ENCODE measurements at regions of chr6 and their contacts with region 1.

Region 1: GRCh38 chr6:149545754-149546528 is at the start of gene PPIL4:
- DNase-seq: peak; percentile 98
- H3K4me3 ChIP-seq: peak within 1 kb of the TSS; percentile 78 to 99 (median 88)
- H3K27ac ChIP-seq: peak within 1 kb of the TSS; percentile 94 to 99 (median 98)
- H3K4me1 ChIP-seq: peaks cover 0 to 31% (median 23%) of the 10 kb centered on the region in 4 donors
- H3K27me3 ChIP-seq: no peaks in the 10 kb centered on the region
- CTCF ChIP-seq: peak; percentile 49 to 87 (median 70)
- EP300 ChIP-seq: peak in 3 of 4 donors; percentile 17 to 89 (median 35)
- POLR2A ChIP-seq: peak; percentile 85 to 86
- total RNA-seq, gene PPIL4: 31.3 to 35.0 (median 31.9) TPM

Region 2: GRCh38 chr6:149565527-149566409 is 19.8 kb after region 1 on chr6 and contains the start of gene GINM1:
- intact Hi-C with region 1: loop called (anchors 2 kb)
- DNase-seq: peak; percentile 95
- H3K4me3 ChIP-seq: peak within 1 kb of the TSS; percentile 83 to 100 (median 94)
- H3K27ac ChIP-seq: peak within 1 kb of the TSS; percentile 94 to 99 (median 96)
- H3K4me1 ChIP-seq: peaks cover 0 to 16% (median 12%) of the 10 kb centered on the region in 4 donors
- H3K27me3 ChIP-seq: no peaks in the 10 kb centered on the region
- CTCF ChIP-seq: peak; percentile 31 to 61 (median 58)
- EP300 ChIP-seq: no peak
- POLR2A ChIP-seq: no peak
- total RNA-seq, gene GINM1: 61.6 to 82.4 (median 74.4) TPM

Region 3: DNA sequence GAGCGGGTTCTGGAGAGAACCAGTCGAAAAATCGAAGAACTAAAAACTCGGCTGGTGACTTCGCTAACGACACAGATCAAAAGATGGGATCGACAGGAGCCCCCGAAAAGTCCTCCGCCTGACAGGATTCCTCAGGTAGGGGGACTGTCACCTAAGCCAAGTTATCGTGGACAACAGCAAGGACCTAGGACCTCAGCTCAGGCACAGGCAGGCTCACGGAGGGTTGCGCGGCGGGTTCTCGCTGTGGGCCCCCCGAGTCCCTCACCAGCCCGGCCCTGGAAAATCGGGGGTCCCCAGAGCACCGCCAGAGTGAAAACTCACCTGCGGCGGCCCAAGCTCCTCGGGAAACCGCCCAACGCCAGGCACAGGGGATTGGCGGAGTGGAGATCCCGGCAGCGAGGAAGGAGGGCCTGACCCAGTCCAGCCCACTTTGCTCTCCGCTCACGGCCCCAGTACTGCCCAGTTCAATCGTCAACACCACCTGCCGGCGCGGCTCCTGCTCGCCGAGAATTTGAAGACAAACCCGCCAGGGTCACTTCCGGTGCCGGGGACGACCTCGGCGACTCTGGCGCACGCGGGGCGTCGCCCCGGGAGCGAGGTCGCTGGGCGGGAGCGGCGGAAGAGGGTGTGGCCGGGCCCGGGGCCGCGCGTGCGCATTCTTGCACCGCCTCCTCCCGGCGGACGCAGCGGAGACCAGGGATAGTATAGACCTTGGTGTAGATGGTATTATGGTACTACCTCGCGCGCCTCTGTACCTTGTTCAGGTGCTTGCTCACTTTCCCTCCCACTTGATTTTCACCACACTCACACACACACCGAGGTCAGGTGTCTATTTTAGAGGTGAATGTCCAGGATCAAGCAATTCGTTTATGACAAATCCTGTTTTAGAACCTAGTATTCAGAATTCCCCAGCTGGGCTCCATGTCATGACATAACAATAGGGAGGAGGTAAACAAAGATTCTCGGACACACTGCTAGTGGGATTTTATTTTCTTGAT is 102.5 kb after region 1 on chr6 and contains the start of gene KATNA1:
- intact Hi-C with region 1: loop called (anchors 2 kb)
- DNase-seq: peak; percentile 89
- H3K4me3 ChIP-seq: peak within 1 kb of the TSS; percentile 78 to 98 (median 87)
- H3K27ac ChIP-seq: peak within 1 kb of the TSS; percentile 75 to 85 (median 82)
- H3K4me1 ChIP-seq: peaks cover 0 to 20% (median 12%) of the 10 kb centered on the region in 4 donors
- H3K27me3 ChIP-seq: no peaks in the 10 kb centered on the region
- CTCF ChIP-seq: no peak
- EP300 ChIP-seq: no peak
- POLR2A ChIP-seq: peak; percentile 24 to 58
- total RNA-seq, gene KATNA1: 17.5 to 22.5 (median 20.6) TPM

Region 4: GRCh38 chr6:149925974-149926777 is 380.2 kb after region 1 on chr6:
- intact Hi-C with region 1: loop called (anchors 10 kb)
- DNase-seq: peak; percentile 94
- H3K4me3 ChIP-seq: peak overlapping the region; percentile 33 to 58 (median 50)
- H3K27ac ChIP-seq: peak overlapping the region in 3 of 4 donors; percentile 27 to 65 (median 33)
- H3K4me1 ChIP-seq: peaks cover 0 to 31% (median 25%) of the 10 kb centered on the region in 4 donors
- H3K27me3 ChIP-seq: peaks cover 0 to 30% (median 17%) of the 10 kb centered on the region in 3 donors
- CTCF ChIP-seq: peak; percentile 94 to 98 (median 96)
- EP300 ChIP-seq: no peak
- POLR2A ChIP-seq: no peak